AG04450 (cell line): ENCODE measurements at regions of chr17 and their contacts with region 1.

Region 1: GRCh38 chr17:732902-733720 is 715 bp downstream of the TLCD3A start:
- DNase-seq: no peak
- H3K4me3 ChIP-seq: peak overlapping the region; percentile 71
- H3K27ac ChIP-seq: peak overlapping the region; percentile 47
- H3K27me3 ChIP-seq: no peaks in the 10 kb centered on the region
- CTCF ChIP-seq: no peak

Region 2: GRCh38 chr17:716238-716637 is 16.9 kb before region 1 on chr17:
- CTCF ChIA-PET with region 1: no interaction called
- POLR2A ChIA-PET with region 1: interaction called, 12 read pairs
- DNase-seq: no peak
- H3K4me3 ChIP-seq: no peak overlapping the region
- H3K27ac ChIP-seq: no peak overlapping the region
- H3K27me3 ChIP-seq: no peaks in the 10 kb centered on the region
- CTCF ChIP-seq: no peak